ENCODE measurements at regions of chr2 and their contacts with region 1.

Region 1: GRCh38 chr2:86176597-86176996 is 18.7 kb downstream of the IMMT start:
- DNase-seq: no peak
- H3K4me3 ChIP-seq: no peak overlapping the region
- H3K27ac ChIP-seq: no peak overlapping the region
- H3K4me1 ChIP-seq: no peaks in the 10 kb centered on the region
- H3K27me3 ChIP-seq: no peaks in the 10 kb centered on the region
- CTCF ChIP-seq: no peak

Region 2: GRCh38 chr2:85865539-85866164 is 310.9 kb before region 1 on chr2:
- CTCF ChIA-PET with region 1: no interaction called
- POLR2A ChIA-PET with region 1: no interaction called
- intact Hi-C with region 1: no loop called
- DNase-seq: no peak
- H3K4me3 ChIP-seq: no peak overlapping the region
- H3K27ac ChIP-seq: no peak overlapping the region
- H3K4me1 ChIP-seq: no peaks in the 10 kb centered on the region
- H3K27me3 ChIP-seq: no peaks in the 10 kb centered on the region
- CTCF ChIP-seq: no peak

Region 3: GRCh38 chr2:86003967-86004366 is 172.6 kb before region 1 on chr2:
- CTCF ChIA-PET with region 1: no interaction called
- POLR2A ChIA-PET with region 1: no interaction called
- intact Hi-C with region 1: no loop called
- DNase-seq: no peak
- H3K4me3 ChIP-seq: no peak overlapping the region
- H3K27ac ChIP-seq: no peak overlapping the region
- H3K4me1 ChIP-seq: 0 out of 2 replicates have a peak, but pooled peaks cover 6% of the 10 kb centered on the region
- H3K27me3 ChIP-seq: no peaks in the 10 kb centered on the region
- CTCF ChIP-seq: no peak

Region 4: GRCh38 chr2:86123328-86123925 is 53.2 kb before region 1 on chr2:
- CTCF ChIA-PET with region 1: no interaction called
- POLR2A ChIA-PET with region 1: no interaction called
- intact Hi-C with region 1: loop called (anchors 10 kb)
- DNase-seq: no peak
- H3K4me3 ChIP-seq: no peak overlapping the region
- H3K27ac ChIP-seq: no peak overlapping the region
- H3K4me1 ChIP-seq: no peaks in the 10 kb centered on the region
- H3K27me3 ChIP-seq: no peaks in the 10 kb centered on the region
- CTCF ChIP-seq: no peak

Measured in PC-9 (cell line).